Mammary epithelial cell (primary cell): ENCODE measurements at regions of chr1 and their contacts with region 1.

Region 1: DNA sequence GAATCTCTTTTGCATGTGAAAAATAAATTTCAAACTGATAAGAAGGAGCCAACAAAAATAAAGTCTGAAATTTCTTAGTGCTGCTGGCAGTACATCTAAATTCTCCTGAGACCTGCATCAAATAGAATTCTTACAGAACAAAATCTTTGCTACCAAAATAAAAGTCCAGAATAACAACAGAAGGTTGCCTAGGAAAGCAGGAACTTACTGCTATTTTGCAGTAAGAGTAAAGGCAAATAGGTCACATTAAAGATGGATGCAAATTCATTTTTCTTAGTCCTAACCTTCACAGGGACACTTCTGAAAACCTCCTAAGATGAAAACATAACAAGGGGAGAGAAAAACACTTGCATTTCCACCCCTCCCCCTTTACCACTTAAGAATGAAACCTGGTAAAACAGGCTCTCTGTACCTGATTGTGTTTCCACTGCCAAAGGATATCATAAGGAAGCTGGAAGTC is 59.0 kb downstream of the RUSC1 start:
- DNase-seq: no peak
- H3K4me3 ChIP-seq: no peak overlapping the region
- H3K27ac ChIP-seq: no peak overlapping the region
- H3K4me1 ChIP-seq: no peaks in the 10 kb centered on the region
- H3K27me3 ChIP-seq: no peaks in the 10 kb centered on the region
- CTCF ChIP-seq: no peak

Region 2: GRCh38 chr1:155548706-155549105 is 169.0 kb after region 1 on chr1:
- CTCF ChIA-PET with region 1: interaction called, 10 read pairs
- dilution Hi-C with region 1: no loop called
- in situ Hi-C with region 1: no loop called
- intact Hi-C with region 1: no loop called
- DNase-seq: no peak
- H3K4me3 ChIP-seq: no peak overlapping the region
- H3K27ac ChIP-seq: no peak overlapping the region
- H3K4me1 ChIP-seq: peaks cover 10% of the 10 kb centered on the region
- H3K27me3 ChIP-seq: no peaks in the 10 kb centered on the region
- CTCF ChIP-seq: no peak